ENCODE measurements at regions of chr19 and their contacts with region 1.

Region 1: DNA sequence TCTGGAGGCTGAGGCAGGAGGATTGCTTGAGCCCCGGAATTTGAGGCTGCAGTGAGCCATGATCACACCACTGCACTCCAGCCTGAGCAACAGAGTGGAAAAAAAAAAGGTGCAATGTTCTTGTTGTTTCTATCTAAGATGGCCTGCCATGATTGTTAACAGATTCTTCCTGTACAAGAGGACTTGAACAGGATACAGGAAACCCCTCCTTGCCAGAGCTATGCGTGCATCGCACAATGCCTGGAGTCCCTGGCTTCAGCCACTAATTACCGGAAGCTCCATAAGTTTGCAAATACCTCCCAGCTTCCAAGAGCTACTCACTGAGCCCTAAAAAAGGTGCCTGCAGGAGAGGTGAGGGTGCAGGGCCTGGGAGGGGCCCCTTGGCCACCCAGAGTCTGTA is 13.1 kb upstream of the HIF3A start:
- DNase-seq: peak in 4 of 5 donors; percentile 48 to 60 (median 54)
- ATAC-seq: peak; percentile 49 to 89 (median 64)
- H3K4me3 ChIP-seq: no peak overlapping the region
- H3K27ac ChIP-seq: peak overlapping the region; percentile 24 to 77 (median 61)
- H3K4me1 ChIP-seq: peaks cover 0 to 24% (median 11%) of the 10 kb centered on the region in 12 donors
- H3K27me3 ChIP-seq: no peaks in the 10 kb centered on the region
- CTCF ChIP-seq: no peak
- POLR2A ChIP-seq: no peak

Region 2: GRCh38 chr19:46265217-46265828 is 18.4 kb before region 1 on chr19:
- intact Hi-C with region 1: no loop called
- DNase-seq: peak in 4 of 5 donors; percentile 38 to 54 (median 48)
- ATAC-seq: peak; percentile 71 to 89 (median 74)
- H3K4me3 ChIP-seq: no peak overlapping the region
- H3K27ac ChIP-seq: no peak overlapping the region
- H3K4me1 ChIP-seq: peaks cover 0 to 4% (median 0%) of the 10 kb centered on the region in 12 donors
- H3K27me3 ChIP-seq: peaks cover 0 to 38% (median 7%) of the 10 kb centered on the region in 9 donors
- CTCF ChIP-seq: peak; percentile 79 to 88 (median 86)
- POLR2A ChIP-seq: no peak

Region 3: DNA sequence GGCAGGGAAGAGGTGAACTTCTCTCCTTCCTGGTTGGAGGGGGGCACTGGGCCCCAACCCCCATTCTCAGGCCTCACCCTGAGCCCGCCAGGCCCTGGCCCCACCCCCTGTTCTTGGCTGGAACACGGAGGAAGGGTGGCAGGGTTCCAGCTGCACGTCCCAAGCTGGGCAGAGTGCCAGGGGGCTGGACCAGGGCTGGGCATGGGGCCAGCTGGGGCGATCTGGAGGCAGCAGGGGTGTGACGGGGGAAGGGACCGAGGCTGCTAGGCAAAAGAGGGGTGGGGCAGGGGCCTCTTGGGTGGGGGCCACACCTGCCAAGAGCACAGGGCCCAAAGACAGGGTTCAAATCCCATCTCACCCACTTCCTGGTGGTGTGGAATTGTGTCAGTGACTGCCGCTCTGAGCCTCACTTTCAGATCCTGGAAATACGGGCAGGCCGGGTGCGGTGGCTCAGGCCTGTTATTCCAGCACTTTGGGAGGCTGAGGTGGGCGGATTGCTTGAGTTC is 15.3 kb after region 1 on chr19:
- intact Hi-C with region 1: loop called in 3 of 10 experiments (anchors 2 kb)
- DNase-seq: peak; percentile 96 to 98 (median 97)
- ATAC-seq: peak; percentile 70 to 82 (median 72)
- H3K4me3 ChIP-seq: peak overlapping the region; percentile 42 to 79 (median 68)
- H3K27ac ChIP-seq: peak overlapping the region; percentile 88 to 99 (median 98)
- H3K4me1 ChIP-seq: peaks cover 7 to 67% (median 55%) of the 10 kb centered on the region in 12 donors
- H3K27me3 ChIP-seq: peaks cover 0 to 6% (median 0%) of the 10 kb centered on the region in 9 donors
- CTCF ChIP-seq: no peak
- POLR2A ChIP-seq: peak in 1 of 2 donors; percentile 42

Region 4: DNA sequence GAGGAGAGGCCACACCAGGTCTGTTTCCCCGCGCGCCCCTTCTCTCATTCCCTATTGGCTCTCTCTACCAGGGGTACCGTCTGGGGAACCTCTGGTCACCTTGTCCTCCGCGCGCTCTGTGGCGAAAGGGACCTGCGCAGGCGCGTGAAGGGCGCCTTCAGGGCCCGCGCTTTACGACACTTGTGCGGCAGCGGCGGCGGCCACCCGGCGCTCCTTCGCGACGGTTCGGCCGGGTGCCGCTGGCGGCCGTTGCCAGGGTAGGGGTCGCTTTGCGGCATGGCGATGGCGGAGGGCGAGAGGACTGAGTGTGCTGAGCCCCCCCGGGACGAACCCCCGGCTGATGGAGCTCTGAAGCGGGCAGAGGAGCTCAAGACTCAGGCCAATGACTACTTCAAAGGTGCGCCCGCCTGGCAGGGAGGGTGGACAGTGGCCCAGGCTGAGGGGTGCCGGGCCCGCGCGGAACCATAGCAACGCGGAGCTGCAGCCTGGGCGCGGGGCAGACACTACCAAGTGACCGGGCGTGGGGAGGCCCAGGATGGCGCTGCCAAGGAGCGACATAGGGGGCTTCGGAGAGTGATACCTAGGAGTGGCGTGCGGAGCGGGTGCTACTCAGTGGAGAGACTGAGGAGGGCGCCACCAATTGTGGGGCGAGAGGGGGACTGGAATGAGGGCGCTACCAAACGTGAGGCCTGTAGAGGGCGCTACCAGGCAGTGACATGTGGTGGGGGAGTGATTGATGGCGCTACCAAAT is 63.2 kb after region 1 on chr19 and contains the start of gene PPP5C:
- intact Hi-C with region 1: loop called in 5 of 10 experiments (anchors 5 to 10 kb)
- DNase-seq: peak; percentile 92 to 97 (median 96)
- ATAC-seq: peak; percentile 48 to 83 (median 81)
- H3K4me3 ChIP-seq: peak within 1 kb of the TSS; percentile 70 to 100 (median 96)
- H3K27ac ChIP-seq: peak within 1 kb of the TSS; percentile 52 to 96 (median 90)
- H3K4me1 ChIP-seq: peaks cover 7 to 56% (median 46%) of the 10 kb centered on the region in 12 donors
- H3K27me3 ChIP-seq: no peaks in the 10 kb centered on the region
- CTCF ChIP-seq: peak; percentile 29 to 78 (median 58)
- POLR2A ChIP-seq: peak in 1 of 2 donors; percentile 86
- total RNA-seq, gene PPP5C: 69.9 to 115 (median 77.1) TPM

Region 5: DNA sequence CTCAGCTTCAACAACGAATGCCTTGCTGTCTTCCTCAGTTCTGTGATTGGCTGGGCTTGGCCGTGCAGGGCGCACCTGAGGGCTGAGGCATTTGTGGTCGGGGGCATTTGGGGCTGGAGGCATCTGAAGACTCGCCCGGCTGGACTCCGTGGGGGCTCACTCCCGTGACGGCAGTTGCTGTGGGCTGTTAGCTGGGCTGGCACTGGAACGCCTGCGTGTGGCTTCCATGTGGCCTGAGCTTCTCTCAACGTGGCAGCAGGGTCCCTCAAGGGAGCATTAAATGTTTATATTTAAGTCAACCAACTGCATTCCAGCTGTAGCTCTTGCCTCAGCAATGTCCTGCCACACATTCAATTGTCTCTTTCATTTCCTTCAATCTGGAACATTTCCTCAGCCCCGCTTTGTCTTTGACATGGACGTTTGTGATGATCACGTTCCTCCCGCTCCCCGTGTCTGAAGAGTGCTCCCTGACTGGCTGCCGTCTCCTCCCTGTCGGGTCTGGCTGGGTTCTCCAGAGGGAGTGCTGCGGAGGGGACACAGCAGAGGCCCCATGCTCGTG is 108.6 kb after region 1 on chr19:
- intact Hi-C with region 1: loop called in 5 of 10 experiments (anchors 2 to 5 kb)
- DNase-seq: peak in 1 of 5 donors; percentile 42
- ATAC-seq: no peak
- H3K4me3 ChIP-seq: no peak overlapping the region
- H3K27ac ChIP-seq: no peak overlapping the region
- H3K4me1 ChIP-seq: peaks cover 0 to 5% (median 0%) of the 10 kb centered on the region in 12 donors
- H3K27me3 ChIP-seq: no peaks in the 10 kb centered on the region
- CTCF ChIP-seq: no peak
- POLR2A ChIP-seq: no peak

Region 6: GRCh38 chr19:46404055-46404752 is 120.4 kb after region 1 on chr19:
- intact Hi-C with region 1: loop called in 1 of 10 experiments (anchors 5 kb)
- DNase-seq: peak; percentile 48 to 74 (median 62)
- ATAC-seq: peak; percentile 17 to 68 (median 57)
- H3K4me3 ChIP-seq: peak overlapping the region in 11 of 12 donors; percentile 17 to 59 (median 47)
- H3K27ac ChIP-seq: peak overlapping the region in 11 of 12 donors; percentile 11 to 80 (median 58)
- H3K4me1 ChIP-seq: peaks cover 0 to 41% (median 16%) of the 10 kb centered on the region in 12 donors
- H3K27me3 ChIP-seq: peaks cover 0 to 60% (median 12%) of the 10 kb centered on the region in 9 donors
- CTCF ChIP-seq: peak in 5 of 12 donors; percentile 13 to 38 (median 28)
- POLR2A ChIP-seq: no peak

Region 7: GRCh38 chr19:46487802-46488445 is 204.2 kb after region 1 on chr19:
- intact Hi-C with region 1: loop called in 7 of 10 experiments (anchors 2 to 10 kb)
- DNase-seq: peak; percentile 69 to 88 (median 76)
- ATAC-seq: peak; percentile 55 to 76 (median 74)
- H3K4me3 ChIP-seq: peak overlapping the region in 10 of 12 donors; percentile 17 to 57 (median 42)
- H3K27ac ChIP-seq: peak overlapping the region in 1 of 12 donors; percentile 11
- H3K4me1 ChIP-seq: peaks cover under 1 to 34% (median 24%) of the 10 kb centered on the region in 12 donors
- H3K27me3 ChIP-seq: peaks cover 0 to 65% (median 48%) of the 10 kb centered on the region in 9 donors
- CTCF ChIP-seq: peak; percentile 76 to 94 (median 90)
- POLR2A ChIP-seq: no peak

Region 8: GRCh38 chr19:46513461-46514236 is 229.9 kb after region 1 on chr19:
- intact Hi-C with region 1: loop called in 7 of 10 experiments (anchors 1 to 10 kb)
- DNase-seq: peak; percentile 73 to 86 (median 80)
- ATAC-seq: peak; percentile 42 to 94 (median 90)
- H3K4me3 ChIP-seq: no peak overlapping the region
- H3K27ac ChIP-seq: no peak overlapping the region
- H3K4me1 ChIP-seq: peaks cover 0 to 8% (median 0%) of the 10 kb centered on the region in 12 donors
- H3K27me3 ChIP-seq: peaks cover 0 to 6% (median 0%) of the 10 kb centered on the region in 9 donors
- CTCF ChIP-seq: peak; percentile 64 to 99 (median 95)
- POLR2A ChIP-seq: no peak

Region 9: DNA sequence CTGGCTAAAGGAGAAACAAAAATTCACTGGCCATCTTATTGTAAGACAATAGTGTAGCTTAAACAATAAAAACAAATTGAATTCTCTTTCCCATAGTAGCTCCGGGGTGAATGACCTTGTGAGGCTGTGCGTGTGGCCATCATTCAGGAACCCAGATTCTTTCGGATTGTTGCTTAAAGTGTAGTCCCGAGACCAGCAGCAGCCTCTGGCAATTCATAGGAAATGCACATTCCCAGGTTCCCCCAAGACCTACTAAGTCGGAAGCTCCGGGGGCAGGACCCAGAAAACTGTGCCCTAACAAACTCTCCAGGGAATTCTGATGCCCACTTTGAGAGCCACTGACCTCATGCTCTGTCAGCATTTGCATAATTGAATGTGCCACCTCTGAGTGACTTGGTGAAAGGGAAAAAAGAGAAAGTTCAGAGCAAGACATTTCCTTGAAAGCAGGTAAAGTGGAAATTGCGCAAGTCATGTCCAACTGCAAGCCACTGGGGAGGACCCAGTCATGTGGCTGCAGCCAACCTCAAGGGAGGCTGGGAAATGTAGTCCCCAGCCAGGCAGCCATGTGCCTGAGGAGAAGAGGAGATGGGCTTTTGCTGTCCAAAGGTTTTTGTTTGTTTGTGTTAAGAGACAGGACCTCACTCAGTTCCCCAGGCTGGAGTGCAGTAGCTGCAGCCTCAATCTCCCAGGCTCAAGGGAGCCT is 262.6 kb after region 1 on chr19:
- intact Hi-C with region 1: no loop called
- DNase-seq: no peak
- ATAC-seq: peak; percentile 42 to 68 (median 62)
- H3K4me3 ChIP-seq: peak overlapping the region in 3 of 12 donors; percentile 17 to 36 (median 19)
- H3K27ac ChIP-seq: no peak overlapping the region
- H3K4me1 ChIP-seq: peaks cover 0 to 19% (median 0%) of the 10 kb centered on the region in 12 donors
- H3K27me3 ChIP-seq: no peaks in the 10 kb centered on the region
- CTCF ChIP-seq: no peak
- POLR2A ChIP-seq: no peak